Mammary epithelial cell (primary cell): ENCODE measurements at regions of chr6 and their contacts with region 1.

Region 1: GRCh38 chr6:140052756-140053729 is 678.6 kb upstream of the CITED2 start:
- DNase-seq: peak; percentile 8
- H3K4me3 ChIP-seq: no peak overlapping the region
- H3K27ac ChIP-seq: peak overlapping the region; percentile 93
- H3K4me1 ChIP-seq: peaks cover 32% of the 10 kb centered on the region
- H3K27me3 ChIP-seq: no peaks in the 10 kb centered on the region
- CTCF ChIP-seq: peak; percentile 50 to 57

Region 2: GRCh38 chr6:139881728-139882211 is 171.3 kb before region 1 on chr6:
- CTCF ChIA-PET with region 1: no interaction called
- dilution Hi-C with region 1: no loop called
- in situ Hi-C with region 1: no loop called
- intact Hi-C with region 1: loop called (anchors 2 kb)
- DNase-seq: peak; percentile 30
- H3K4me3 ChIP-seq: no peak overlapping the region
- H3K27ac ChIP-seq: no peak overlapping the region
- H3K4me1 ChIP-seq: peaks cover 9% of the 10 kb centered on the region
- H3K27me3 ChIP-seq: no peaks in the 10 kb centered on the region
- CTCF ChIP-seq: peak; percentile 70 to 73

Region 3: DNA sequence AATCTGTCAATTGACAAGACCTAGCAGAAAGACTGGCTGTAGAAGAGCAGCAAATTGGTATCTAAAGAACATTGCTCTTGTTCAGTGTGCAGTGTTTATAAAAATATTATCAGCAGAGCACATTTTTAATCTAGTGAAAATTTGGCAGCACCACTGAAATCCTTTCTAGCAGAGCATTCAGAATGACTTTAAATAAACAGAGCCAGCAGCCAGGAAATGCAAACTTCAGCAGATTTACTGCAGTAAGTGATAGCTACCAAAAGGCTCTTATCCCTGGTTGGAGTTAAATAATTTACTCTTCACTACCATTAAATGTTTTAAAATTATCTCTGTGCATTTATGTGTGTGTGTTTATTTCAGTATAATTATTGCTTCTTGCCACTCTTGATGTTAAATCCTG is 87.7 kb before region 1 on chr6:
- CTCF ChIA-PET with region 1: no interaction called
- dilution Hi-C with region 1: no loop called
- in situ Hi-C with region 1: no loop called
- intact Hi-C with region 1: no loop called
- DNase-seq: no peak
- H3K4me3 ChIP-seq: no peak overlapping the region
- H3K27ac ChIP-seq: no peak overlapping the region
- H3K4me1 ChIP-seq: no peaks in the 10 kb centered on the region
- H3K27me3 ChIP-seq: no peaks in the 10 kb centered on the region
- CTCF ChIP-seq: no peak

Region 4: GRCh38 chr6:139981768-139982181 is 71.3 kb before region 1 on chr6:
- CTCF ChIA-PET with region 1: no interaction called
- dilution Hi-C with region 1: no loop called
- in situ Hi-C with region 1: no loop called
- intact Hi-C with region 1: loop called (anchors 1 kb)
- DNase-seq: no peak
- H3K4me3 ChIP-seq: no peak overlapping the region
- H3K27ac ChIP-seq: peak overlapping the region; percentile 3
- H3K4me1 ChIP-seq: peaks cover 32% of the 10 kb centered on the region
- H3K27me3 ChIP-seq: no peaks in the 10 kb centered on the region
- CTCF ChIP-seq: no peak

Region 5: GRCh38 chr6:140174515-140174914 is 121.5 kb after region 1 on chr6:
- CTCF ChIA-PET with region 1: no interaction called
- dilution Hi-C with region 1: no loop called
- in situ Hi-C with region 1: no loop called
- intact Hi-C with region 1: loop called (anchors 2 kb)
- DNase-seq: peak; percentile 98
- H3K4me3 ChIP-seq: no peak overlapping the region
- H3K27ac ChIP-seq: peak overlapping the region; percentile 38
- H3K4me1 ChIP-seq: peaks cover 21% of the 10 kb centered on the region
- H3K27me3 ChIP-seq: no peaks in the 10 kb centered on the region
- CTCF ChIP-seq: no peak

Region 6: DNA sequence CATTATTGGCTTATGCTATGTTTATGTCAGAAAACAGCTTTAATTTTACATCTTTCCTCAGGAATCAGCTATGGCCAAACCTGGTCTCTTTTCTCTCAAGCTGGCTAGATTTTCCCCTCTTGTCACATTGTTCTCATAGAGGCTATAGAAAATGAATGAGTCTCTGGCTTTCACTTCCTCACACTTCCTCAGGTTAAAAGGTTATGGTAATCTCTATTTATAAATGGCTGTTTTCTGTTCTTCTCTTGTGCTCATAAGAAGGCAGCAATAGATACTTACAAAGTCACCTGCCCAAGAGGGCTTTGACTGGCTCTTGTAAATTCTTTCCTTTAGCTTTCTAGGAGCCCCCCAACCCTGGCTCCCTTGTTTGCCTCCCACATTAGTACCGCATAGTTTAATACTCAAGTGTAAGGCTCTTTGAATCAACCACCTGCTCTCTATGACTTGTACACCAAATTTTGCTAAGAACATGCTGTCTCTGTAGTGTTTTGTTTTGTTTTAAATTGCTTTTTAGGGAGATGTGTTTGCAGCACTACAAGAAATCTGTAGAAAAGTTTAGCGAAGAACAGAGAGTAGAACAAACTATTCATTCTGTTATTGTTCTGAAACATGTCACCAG is 218.8 kb after region 1 on chr6:
- CTCF ChIA-PET with region 1: no interaction called
- dilution Hi-C with region 1: no loop called
- in situ Hi-C with region 1: no loop called
- intact Hi-C with region 1: loop called (anchors 10 kb)
- DNase-seq: no peak
- H3K4me3 ChIP-seq: no peak overlapping the region
- H3K27ac ChIP-seq: no peak overlapping the region
- H3K4me1 ChIP-seq: peaks cover 6% of the 10 kb centered on the region
- H3K27me3 ChIP-seq: no peaks in the 10 kb centered on the region
- CTCF ChIP-seq: no peak

Region 7: DNA sequence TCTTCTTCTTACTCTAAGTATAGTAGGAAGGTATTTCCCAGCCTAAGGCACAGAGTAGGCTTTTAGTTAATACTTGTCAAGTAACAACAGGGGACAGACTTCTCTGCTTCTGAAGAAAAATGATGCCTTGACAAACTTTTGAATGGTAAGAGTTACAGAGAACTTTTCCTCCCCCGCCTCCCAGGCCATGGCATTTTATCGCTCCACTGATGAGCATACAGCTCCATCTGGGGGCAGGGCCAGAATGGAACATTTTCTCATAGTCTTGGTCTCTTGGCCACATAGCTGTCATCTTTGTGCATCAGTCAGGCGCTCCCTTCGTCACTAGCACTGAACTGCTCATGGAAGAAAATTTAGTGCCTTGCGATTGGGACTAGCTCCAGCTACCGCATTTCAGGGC is 388.2 kb after region 1 on chr6:
- CTCF ChIA-PET with region 1: interaction called, 4 read pairs
- dilution Hi-C with region 1: no loop called
- in situ Hi-C with region 1: no loop called
- intact Hi-C with region 1: loop called (anchors 1 kb)
- DNase-seq: peak; percentile 28
- H3K4me3 ChIP-seq: no peak overlapping the region
- H3K27ac ChIP-seq: no peak overlapping the region
- H3K4me1 ChIP-seq: peaks cover 18% of the 10 kb centered on the region
- H3K27me3 ChIP-seq: no peaks in the 10 kb centered on the region
- CTCF ChIP-seq: peak; percentile 43 to 78

Region 8: GRCh38 chr6:140459187-140459586 is 406.1 kb after region 1 on chr6:
- CTCF ChIA-PET with region 1: no interaction called
- dilution Hi-C with region 1: no loop called
- in situ Hi-C with region 1: no loop called
- intact Hi-C with region 1: no loop called
- DNase-seq: no peak
- H3K4me3 ChIP-seq: no peak overlapping the region
- H3K27ac ChIP-seq: no peak overlapping the region
- H3K4me1 ChIP-seq: peaks cover 17% of the 10 kb centered on the region
- H3K27me3 ChIP-seq: no peaks in the 10 kb centered on the region
- CTCF ChIP-seq: no peak

Region 9: GRCh38 chr6:140921366-140922226 is 868.6 kb after region 1 on chr6:
- CTCF ChIA-PET with region 1: no interaction called
- dilution Hi-C with region 1: no loop called
- in situ Hi-C with region 1: no loop called
- intact Hi-C with region 1: loop called (anchors 1 kb)
- DNase-seq: peak; percentile 89
- H3K4me3 ChIP-seq: no peak overlapping the region
- H3K27ac ChIP-seq: no peak overlapping the region
- H3K4me1 ChIP-seq: no peaks in the 10 kb centered on the region
- H3K27me3 ChIP-seq: no peaks in the 10 kb centered on the region
- CTCF ChIP-seq: peak; percentile 85 to 86